ENCODE measurements at regions of chr11 and their contacts with region 1.

Region 1: DNA sequence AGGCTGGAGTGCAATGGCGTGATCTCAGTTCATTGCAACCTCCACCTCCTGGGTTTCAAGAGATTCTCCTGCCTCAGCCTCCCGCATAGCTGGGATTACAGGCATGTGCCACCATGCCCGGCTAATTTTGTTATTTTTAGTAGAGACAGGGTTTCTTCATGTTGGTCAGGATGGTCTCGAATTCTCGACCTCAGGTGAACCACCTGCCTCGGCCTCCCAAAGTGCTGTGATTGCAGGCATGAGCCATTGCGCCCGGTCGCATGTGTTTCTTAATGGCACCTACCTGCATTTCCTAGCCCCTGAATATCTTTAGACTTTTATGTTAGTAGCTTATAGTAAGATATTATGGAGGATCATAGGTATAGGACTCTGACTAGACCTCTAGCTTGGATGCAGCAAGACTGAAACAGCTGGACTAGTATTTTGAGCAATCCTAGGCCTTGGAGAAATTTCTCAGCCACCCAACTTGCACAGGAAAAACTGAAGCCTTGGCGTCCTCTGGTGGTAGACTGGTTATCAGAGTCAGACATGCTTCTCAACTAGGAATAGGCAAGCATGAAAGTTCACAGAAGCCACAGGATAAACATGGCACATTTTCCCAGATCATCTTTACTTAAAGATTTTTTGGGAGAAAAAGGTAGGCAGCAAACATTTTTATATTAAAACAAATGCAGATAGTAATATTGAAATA is 22.7 kb upstream of the C1QTNF4 start:
- DNase-seq: peak; percentile 25 to 70 (median 48)
- ATAC-seq: peak; percentile 89
- H3K4me3 ChIP-seq: no peak overlapping the region
- H3K27ac ChIP-seq: no peak overlapping the region
- H3K4me1 ChIP-seq: no peaks in the 10 kb centered on the region
- H3K27me3 ChIP-seq: no peaks in the 10 kb centered on the region
- CTCF ChIP-seq: peak; percentile 69 to 87 (median 78)
- EP300 ChIP-seq: no peak
- POLR2A ChIP-seq: peak; percentile 28; the same call in 1 of the 2 replicates
- RAD21 ChIP-seq: peak; percentile 83 to 86

Region 2: GRCh38 chr11:47373876-47374720 is 242.8 kb before region 1 on chr11:
- CTCF ChIA-PET with region 1: interaction called, 5 read pairs
- POLR2A ChIA-PET with region 1: no interaction called
- in situ Hi-C with region 1: no loop called
- intact Hi-C with region 1: loop called (anchors 10 kb)
- DNase-seq: peak; percentile 81 to 88 (median 85)
- ATAC-seq: peak; percentile 72
- H3K4me3 ChIP-seq: no peak overlapping the region
- H3K27ac ChIP-seq: no peak overlapping the region
- H3K4me1 ChIP-seq: peaks cover 37 to 54% of the 10 kb centered on the region in 2 experiments
- H3K27me3 ChIP-seq: no peaks in the 10 kb centered on the region
- CTCF ChIP-seq: peak; percentile 86 to 93 (median 93)
- EP300 ChIP-seq: no peak
- POLR2A ChIP-seq: no peak
- RAD21 ChIP-seq: peak; percentile 78 to 88

Region 3: GRCh38 chr11:47407746-47408590 is 208.9 kb before region 1 on chr11 and contains the start of gene SLC39A13:
- CTCF ChIA-PET with region 1: no interaction called
- POLR2A ChIA-PET with region 1: no interaction called
- in situ Hi-C with region 1: no loop called
- intact Hi-C with region 1: loop called (anchors 2 kb)
- DNase-seq: peak; percentile 95 to 98 (median 96)
- ATAC-seq: peak; percentile 95
- H3K4me3 ChIP-seq: peak within 1 kb of the TSS; percentile 62
- H3K27ac ChIP-seq: peak within 1 kb of the TSS; percentile 98
- H3K4me1 ChIP-seq: peaks cover 28 to 54% of the 10 kb centered on the region in 2 experiments
- H3K27me3 ChIP-seq: no peaks in the 10 kb centered on the region
- CTCF ChIP-seq: peak; percentile 92 to 95 (median 94)
- EP300 ChIP-seq: no peak; the same call in none of the 2 replicates
- POLR2A ChIP-seq: peak; percentile 74
- RAD21 ChIP-seq: peak; percentile 98 to 99
- polyA plus RNA-seq, gene SLC39A13: 0.17 to 0.24 TPM

Region 4: GRCh38 chr11:47454180-47454644 is 162.7 kb before region 1 on chr11:
- CTCF ChIA-PET with region 1: interaction called, 3 read pairs
- POLR2A ChIA-PET with region 1: no interaction called
- in situ Hi-C with region 1: no loop called
- intact Hi-C with region 1: loop called (anchors 1 kb)
- DNase-seq: peak; percentile 61 to 87 (median 74)
- ATAC-seq: peak; percentile 98
- H3K4me3 ChIP-seq: no peak overlapping the region
- H3K27ac ChIP-seq: no peak overlapping the region
- H3K4me1 ChIP-seq: peaks cover 0 to 2% of the 10 kb centered on the region in 2 experiments; a peak in 1 of 5 replicates
- H3K27me3 ChIP-seq: no peaks in the 10 kb centered on the region; a peak in 1 of 5 replicates
- CTCF ChIP-seq: peak; percentile 84 to 95 (median 87)
- EP300 ChIP-seq: 0 out of 2 replicates have a peak, but pooled peaks have one; percentile 6
- POLR2A ChIP-seq: no peak
- RAD21 ChIP-seq: peak; percentile 66 to 76

Region 5: DNA sequence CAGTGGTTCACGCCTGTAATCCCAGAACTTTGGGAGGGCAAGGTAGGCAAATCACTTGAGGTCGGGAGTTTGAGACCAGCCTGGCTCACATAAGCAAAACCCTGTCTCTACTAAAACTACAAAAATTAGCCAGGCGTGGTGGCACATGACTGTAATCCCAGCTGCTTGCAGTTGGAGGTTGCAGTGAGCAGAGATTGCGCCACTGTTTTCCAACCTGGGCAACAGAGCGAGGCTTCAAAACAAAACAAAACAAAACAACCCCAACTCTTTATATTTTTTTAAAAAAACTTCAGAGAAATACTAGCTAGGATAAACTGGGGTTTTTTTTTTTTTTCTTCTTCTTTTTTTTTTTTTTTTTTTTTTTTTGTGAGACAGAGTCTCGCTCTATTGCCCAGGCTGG is 136.1 kb before region 1 on chr11:
- CTCF ChIA-PET with region 1: no interaction called
- POLR2A ChIA-PET with region 1: no interaction called
- in situ Hi-C with region 1: no loop called
- intact Hi-C with region 1: loop called (anchors 10 kb)
- DNase-seq: no peak
- ATAC-seq: no peak
- H3K4me3 ChIP-seq: no peak overlapping the region
- H3K27ac ChIP-seq: no peak overlapping the region
- H3K4me1 ChIP-seq: peaks cover 0 to 11% of the 10 kb centered on the region in 2 experiments; a peak in 2 of 5 replicates
- H3K27me3 ChIP-seq: no peaks in the 10 kb centered on the region
- CTCF ChIP-seq: no peak
- EP300 ChIP-seq: no peak
- POLR2A ChIP-seq: no peak
- RAD21 ChIP-seq: no peak

Region 6: GRCh38 chr11:47514825-47515647 is 101.8 kb before region 1 on chr11:
- CTCF ChIA-PET with region 1: no interaction called
- POLR2A ChIA-PET with region 1: no interaction called
- in situ Hi-C with region 1: no loop called
- intact Hi-C with region 1: no loop called
- DNase-seq: peak; percentile 33 to 70 (median 38)
- ATAC-seq: peak; percentile 63
- H3K4me3 ChIP-seq: no peak overlapping the region
- H3K27ac ChIP-seq: peak overlapping the region; percentile 48; the same call in 1 of the 3 replicates
- H3K4me1 ChIP-seq: peaks cover 37 to 59% of the 10 kb centered on the region in 2 experiments
- H3K27me3 ChIP-seq: no peaks in the 10 kb centered on the region
- CTCF ChIP-seq: no peak
- EP300 ChIP-seq: peak; percentile 33; the same call in 1 of the 2 replicates
- POLR2A ChIP-seq: no peak
- RAD21 ChIP-seq: no peak

Region 7: GRCh38 chr11:47552566-47553416 is 64.1 kb before region 1 on chr11 and contains the start of gene CELF1:
- CTCF ChIA-PET with region 1: interaction called, 7 read pairs
- POLR2A ChIA-PET with region 1: no interaction called
- in situ Hi-C with region 1: no loop called
- intact Hi-C with region 1: loop called (anchors 2 kb)
- DNase-seq: peak; percentile 87 to 94 (median 90)
- ATAC-seq: peak; percentile 96
- H3K4me3 ChIP-seq: peak within 1 kb of the TSS; percentile 100
- H3K27ac ChIP-seq: peak within 1 kb of the TSS; percentile 92
- H3K4me1 ChIP-seq: peaks cover 11 to 18% of the 10 kb centered on the region in 2 experiments; a peak in 4 of 5 replicates
- H3K27me3 ChIP-seq: no peaks in the 10 kb centered on the region
- CTCF ChIP-seq: peak; percentile 80 to 93 (median 92)
- EP300 ChIP-seq: no peak
- POLR2A ChIP-seq: peak; percentile 77
- RAD21 ChIP-seq: peak; percentile 22 to 54; a peak in 3 of 4 replicates
- polyA plus RNA-seq, gene CELF1: 11.3 to 21.6 TPM

Region 8: GRCh38 chr11:47750725-47751124 is 133.9 kb after region 1 on chr11:
- CTCF ChIA-PET with region 1: no interaction called
- POLR2A ChIA-PET with region 1: no interaction called
- in situ Hi-C with region 1: no loop called
- intact Hi-C with region 1: no loop called
- DNase-seq: no peak
- ATAC-seq: no peak
- H3K4me3 ChIP-seq: no peak overlapping the region
- H3K27ac ChIP-seq: no peak overlapping the region
- H3K4me1 ChIP-seq: no peaks in the 10 kb centered on the region
- H3K27me3 ChIP-seq: no peaks in the 10 kb centered on the region
- CTCF ChIP-seq: no peak
- EP300 ChIP-seq: no peak
- POLR2A ChIP-seq: no peak
- RAD21 ChIP-seq: no peak